SK-N-SH (cell line): ENCODE measurements at regions of chr2 and their contacts with region 1.

Region 1: GRCh38 chr2:217785544-217786045 is 217.2 kb downstream of the TNS1 start:
- DNase-seq: peak; percentile 90
- H3K4me3 ChIP-seq: no peak overlapping the region; a peak in 1 of 4 replicates
- H3K27ac ChIP-seq: no peak overlapping the region
- H3K4me1 ChIP-seq: peaks cover 0 to 9% of the 10 kb centered on the region in 2 experiments; a peak in 2 of 4 replicates
- H3K27me3 ChIP-seq: no peaks in the 10 kb centered on the region
- CTCF ChIP-seq: peak; percentile 94
- EP300 ChIP-seq: no peak
- RAD21 ChIP-seq: peak; percentile 98

Region 2: DNA sequence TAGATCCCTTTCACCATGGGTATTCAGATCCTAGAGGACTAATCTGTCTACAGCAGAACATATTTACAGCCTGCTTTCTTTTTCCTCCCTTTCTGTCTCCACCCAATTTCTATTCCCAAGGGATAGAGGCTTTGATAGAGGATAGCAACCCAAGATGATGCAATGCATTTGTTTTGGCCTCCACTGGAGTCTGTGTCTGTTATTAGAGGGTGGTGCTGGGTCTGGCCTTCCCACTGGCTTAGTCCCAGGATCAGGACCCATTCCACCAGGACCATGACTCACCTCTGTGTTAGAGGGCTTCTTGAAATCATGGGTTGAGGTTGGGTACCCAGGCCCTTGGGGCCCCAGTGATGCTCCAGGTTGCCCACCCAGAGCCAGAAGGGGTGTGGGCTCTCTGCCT is 686.0 kb before region 1 on chr2:
- CTCF ChIA-PET with region 1: no interaction called
- POLR2A ChIA-PET with region 1: no interaction called
- DNase-seq: no peak
- H3K4me3 ChIP-seq: no peak overlapping the region
- H3K27ac ChIP-seq: no peak overlapping the region
- H3K4me1 ChIP-seq: peaks cover 0 to 19% of the 10 kb centered on the region in 2 experiments; a peak in 1 of 4 replicates
- H3K27me3 ChIP-seq: no peaks in the 10 kb centered on the region
- CTCF ChIP-seq: no peak
- EP300 ChIP-seq: no peak
- RAD21 ChIP-seq: no peak

Region 3: GRCh38 chr2:217858519-217859491 is 73.2 kb after region 1 on chr2:
- CTCF ChIA-PET with region 1: interaction called, 13 read pairs
- POLR2A ChIA-PET with region 1: no interaction called
- DNase-seq: peak; percentile 89
- H3K4me3 ChIP-seq: no peak overlapping the region
- H3K27ac ChIP-seq: peak overlapping the region; percentile 43 to 68
- H3K4me1 ChIP-seq: peaks cover 7 to 25% of the 10 kb centered on the region in 2 experiments; a peak in 2 of 4 replicates
- H3K27me3 ChIP-seq: no peaks in the 10 kb centered on the region
- CTCF ChIP-seq: no peak
- EP300 ChIP-seq: peak in 1 of 2 experiments; percentile 43; a peak in 1 of 4 replicates
- RAD21 ChIP-seq: peak; percentile 34

Region 4: DNA sequence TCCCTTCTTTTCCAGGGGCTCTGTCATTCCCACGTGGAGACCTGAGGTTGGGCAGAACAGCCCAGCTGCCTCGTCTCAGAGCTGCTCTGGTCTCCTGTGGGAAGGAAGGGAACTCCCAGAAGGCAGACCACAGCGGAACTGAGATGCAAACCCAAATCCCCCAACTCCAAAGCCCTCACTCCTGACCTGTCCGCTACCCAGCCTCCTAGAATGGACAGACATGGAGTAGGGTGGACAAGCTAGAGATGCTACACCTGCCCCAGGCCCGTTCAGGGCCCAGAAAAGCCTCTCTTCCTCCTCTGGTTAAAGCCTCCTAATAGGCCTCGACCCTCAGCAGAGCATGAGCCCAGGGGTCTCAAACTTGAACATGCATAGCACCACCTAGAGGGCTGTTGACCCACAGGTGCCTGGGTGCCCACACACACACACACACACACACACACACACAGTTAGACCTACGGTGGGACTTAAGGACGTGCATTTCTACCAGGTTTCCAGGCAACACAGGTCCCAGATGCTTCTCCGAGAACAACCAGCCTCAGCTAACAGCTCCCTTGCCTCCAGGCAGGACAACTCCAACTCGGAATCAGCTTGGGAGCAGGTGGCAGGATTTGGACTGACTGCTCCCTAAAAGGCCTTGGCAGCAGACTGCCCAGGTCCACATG is 123.7 kb after region 1 on chr2:
- CTCF ChIA-PET with region 1: interaction called, 13 read pairs
- POLR2A ChIA-PET with region 1: no interaction called
- DNase-seq: peak; percentile 61
- H3K4me3 ChIP-seq: no peak overlapping the region
- H3K27ac ChIP-seq: peak overlapping the region in 1 of 2 experiments; percentile 76; a peak in 2 of 4 replicates
- H3K4me1 ChIP-seq: peaks cover 19 to 78% of the 10 kb centered on the region in 2 experiments; a peak in 2 of 4 replicates
- H3K27me3 ChIP-seq: no peaks in the 10 kb centered on the region
- CTCF ChIP-seq: peak; percentile 16
- EP300 ChIP-seq: no peak
- RAD21 ChIP-seq: peak; percentile 16; the same call in 1 of the 2 replicates

Region 5: GRCh38 chr2:217953531-217953932 is 167.9 kb after region 1 on chr2:
- CTCF ChIA-PET with region 1: interaction called, 13 read pairs
- POLR2A ChIA-PET with region 1: no interaction called
- DNase-seq: no peak
- H3K4me3 ChIP-seq: no peak overlapping the region
- H3K27ac ChIP-seq: no peak overlapping the region; a peak in 1 of 4 replicates
- H3K4me1 ChIP-seq: peaks cover 3 to 56% of the 10 kb centered on the region in 2 experiments; a peak in 3 of 4 replicates
- H3K27me3 ChIP-seq: no peaks in the 10 kb centered on the region
- CTCF ChIP-seq: no peak
- EP300 ChIP-seq: no peak
- RAD21 ChIP-seq: no peak

Region 6: GRCh38 chr2:218010140-218010983 is 224.8 kb after region 1 on chr2:
- CTCF ChIA-PET with region 1: interaction called, 666 read pairs
- POLR2A ChIA-PET with region 1: no interaction called
- DNase-seq: peak; percentile 91
- H3K4me3 ChIP-seq: peak overlapping the region; percentile 76 to 95
- H3K27ac ChIP-seq: peak overlapping the region in 1 of 2 experiments; percentile 72; a peak in 3 of 4 replicates
- H3K4me1 ChIP-seq: peaks cover 51 to 69% of the 10 kb centered on the region in 2 experiments
- H3K27me3 ChIP-seq: no peaks in the 10 kb centered on the region
- CTCF ChIP-seq: peak; percentile 63
- EP300 ChIP-seq: no peak
- RAD21 ChIP-seq: peak; percentile 53

Region 7: GRCh38 chr2:218046238-218046637 is 260.6 kb after region 1 on chr2:
- CTCF ChIA-PET with region 1: interaction called, 30 read pairs
- POLR2A ChIA-PET with region 1: no interaction called
- DNase-seq: no peak
- H3K4me3 ChIP-seq: no peak overlapping the region
- H3K27ac ChIP-seq: no peak overlapping the region
- H3K4me1 ChIP-seq: no peaks in the 10 kb centered on the region
- H3K27me3 ChIP-seq: no peaks in the 10 kb centered on the region
- CTCF ChIP-seq: no peak
- EP300 ChIP-seq: no peak
- RAD21 ChIP-seq: no peak